ENCODE measurements at regions of chr2 and their contacts with region 1.

Region 1: GRCh38 chr2:85011747-85012146 is 40.8 kb downstream of the KCMF1 start:
- H3K4me3 Mint-ChIP-seq: no peak overlapping the region
- H3K27ac Mint-ChIP-seq: no peak overlapping the region
- H3K4me1 Mint-ChIP-seq: peaks cover 78% of the 10 kb centered on the region
- H3K27me3 Mint-ChIP-seq: no peaks in the 10 kb centered on the region

Region 2: GRCh38 chr2:84970868-84971509 is 40.8 kb before region 1 on chr2 and contains the start of gene KCMF1:
- intact Hi-C with region 1: loop called (anchors 2 kb)
- H3K4me3 Mint-ChIP-seq: peak within 1 kb of the TSS; percentile 97
- H3K27ac Mint-ChIP-seq: peak within 1 kb of the TSS; percentile 97
- H3K4me1 Mint-ChIP-seq: peaks cover 45% of the 10 kb centered on the region
- H3K27me3 Mint-ChIP-seq: no peaks in the 10 kb centered on the region

Region 3: DNA sequence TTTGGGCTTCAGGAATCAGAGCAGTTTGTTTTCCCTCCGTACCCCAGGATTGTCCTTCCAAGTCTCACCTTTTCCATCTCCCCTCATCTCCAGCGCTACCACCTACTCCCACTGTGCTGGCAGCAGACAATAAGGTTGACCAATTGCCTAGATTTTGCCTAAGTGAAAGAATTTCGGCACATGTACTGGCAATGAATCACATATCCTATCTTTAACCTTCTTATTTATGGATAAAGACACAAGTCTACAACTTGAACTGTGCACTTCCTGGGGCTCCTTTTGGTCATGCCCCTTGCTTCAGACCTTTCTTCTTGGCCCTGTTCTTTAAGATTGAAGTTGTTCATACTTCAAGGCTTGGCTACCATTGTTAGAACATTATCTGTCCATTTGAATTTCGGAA is 30.6 kb after region 1 on chr2:
- intact Hi-C with region 1: no loop called
- H3K4me3 Mint-ChIP-seq: no peak overlapping the region
- H3K27ac Mint-ChIP-seq: no peak overlapping the region
- H3K4me1 Mint-ChIP-seq: no peaks in the 10 kb centered on the region
- H3K27me3 Mint-ChIP-seq: no peaks in the 10 kb centered on the region

Measured in dendritic cell treated with granulocyte-macrophage colony-stimulating factor and Interleukin-4, amounts not matched to agents 40 ng/mL and 50 ng/mL, for 4 days (primary cell).